ENCODE measurements at regions of chr17 and their contacts with region 1.

Region 1: DNA sequence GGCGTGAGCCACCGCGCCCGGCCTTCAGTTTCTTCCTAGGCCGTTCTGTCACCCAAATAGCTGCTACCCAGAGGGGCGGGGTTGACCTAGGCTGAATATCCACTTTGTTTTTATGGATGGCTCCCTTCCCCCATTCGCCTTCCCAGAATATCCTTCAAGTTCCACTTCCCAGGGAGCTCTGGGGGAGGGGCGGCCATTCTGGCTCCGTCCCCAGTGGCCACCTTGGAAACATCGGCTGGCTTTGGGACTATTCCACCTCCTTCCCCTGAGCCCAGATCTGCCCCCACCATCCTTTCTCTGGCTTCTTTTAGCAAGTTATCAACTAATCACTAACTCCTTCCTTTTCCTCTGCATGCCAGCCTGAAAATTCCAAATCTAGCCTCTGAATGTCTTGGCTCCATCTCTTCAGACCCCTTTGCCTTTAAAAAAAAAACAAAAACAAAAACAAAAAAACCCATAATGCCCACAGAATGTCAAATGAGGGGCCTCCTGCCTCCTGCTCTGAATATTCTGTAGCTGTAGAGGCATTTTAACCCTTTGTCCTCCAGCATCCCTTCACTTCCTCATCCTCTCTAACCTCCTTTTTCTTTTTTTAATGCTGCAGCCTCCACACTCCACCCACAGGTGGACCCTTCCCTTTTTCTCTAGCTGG is 6.4 kb downstream of the ATP1B2 start:
- DNase-seq: no peak
- H3K4me3 ChIP-seq: no peak overlapping the region
- H3K27me3 ChIP-seq: peaks cover 25% of the 10 kb centered on the region
- CTCF ChIP-seq: no peak

Region 2: DNA sequence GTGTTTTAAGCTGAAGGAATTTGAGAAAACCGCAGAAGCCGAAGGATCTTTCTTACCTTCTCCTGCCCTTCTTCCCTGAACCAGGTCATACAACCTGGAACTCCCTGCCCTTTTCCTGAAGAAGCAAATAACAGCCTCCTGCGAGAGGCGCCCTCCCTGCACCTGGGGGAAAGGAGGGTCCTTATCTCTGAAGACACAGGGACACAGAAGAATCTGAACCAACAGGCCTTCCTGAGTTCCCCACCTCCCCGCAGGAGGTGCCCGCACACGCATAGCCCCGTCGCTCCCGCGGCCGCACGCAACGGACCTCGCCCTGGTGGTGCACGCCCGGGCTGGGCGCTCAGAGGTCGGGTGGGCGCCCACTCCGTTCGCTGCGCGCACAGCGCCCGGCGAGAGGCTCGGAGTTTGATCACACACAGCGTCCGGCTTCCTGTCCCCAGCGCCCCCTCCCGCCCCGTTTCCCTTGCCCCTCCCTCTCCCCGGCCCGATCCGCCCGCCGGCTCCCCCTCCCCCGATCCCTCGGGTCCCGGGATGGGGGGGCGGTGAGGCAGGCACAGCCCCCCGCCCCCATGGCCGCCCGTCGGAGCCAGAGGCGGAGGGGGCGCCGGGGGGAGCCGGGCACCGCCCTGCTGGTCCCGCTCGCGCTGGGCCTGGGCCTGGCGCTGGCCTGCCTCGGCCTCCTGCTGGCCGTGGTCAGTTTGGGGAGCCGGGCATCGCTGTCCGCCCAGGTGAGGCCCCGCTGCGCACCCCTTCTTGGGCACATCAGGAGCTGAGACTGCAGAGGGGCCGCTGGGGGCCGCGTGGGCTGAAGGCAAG is 108.3 kb before region 1 on chr17 and contains the start of gene TNFSF12:
- CTCF ChIA-PET with region 1: no interaction called
- POLR2A ChIA-PET with region 1: no interaction called
- DNase-seq: no peak
- H3K4me3 ChIP-seq: peak within 1 kb of the TSS; percentile 68
- H3K27me3 ChIP-seq: no peaks in the 10 kb centered on the region
- CTCF ChIP-seq: peak; percentile 25
- polyA plus RNA-seq, gene TNFSF12: 29.2 and 49.5 TPM in 2 replicates

Region 3: DNA sequence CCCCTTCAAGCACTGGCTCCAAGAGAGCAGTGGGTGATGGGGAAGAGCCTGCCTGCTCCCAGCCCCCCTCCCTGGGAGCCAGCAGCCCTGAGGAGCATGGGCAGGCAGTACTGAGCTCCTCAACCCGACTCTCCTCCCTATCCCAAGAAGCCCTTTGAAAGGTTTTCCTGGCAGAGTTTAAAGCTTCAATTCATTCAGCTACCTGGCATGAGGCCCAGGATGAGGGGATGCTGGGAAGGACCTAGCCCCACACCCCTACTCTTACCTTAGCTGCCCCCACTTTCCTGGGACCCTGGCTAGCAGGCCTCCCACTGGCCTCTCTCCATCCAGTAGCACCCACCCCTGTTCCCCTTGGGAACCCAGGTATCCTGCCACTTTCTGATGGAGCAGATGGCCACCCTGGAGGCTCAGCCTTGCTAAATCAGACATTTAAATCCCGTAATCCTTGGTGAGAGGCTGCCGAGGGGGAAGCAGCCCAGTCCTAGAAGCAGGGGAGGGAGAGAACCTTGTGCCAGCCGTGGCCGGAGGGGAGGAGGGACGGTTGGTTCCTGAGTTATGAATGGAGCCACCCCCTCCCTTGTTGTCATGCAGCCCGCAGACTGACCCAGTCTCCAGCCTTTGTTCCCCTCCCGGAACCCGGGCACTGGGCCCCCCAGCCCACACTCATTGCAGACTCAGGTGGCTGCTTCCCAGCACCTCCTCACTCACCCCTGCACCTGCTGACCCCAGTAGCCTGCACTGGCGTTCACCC is 10.7 kb after region 1 on chr17:
- CTCF ChIA-PET with region 1: interaction called, 8 read pairs
- POLR2A ChIA-PET with region 1: interaction called, 15 read pairs
- DNase-seq: no peak
- H3K4me3 ChIP-seq: no peak overlapping the region
- H3K27me3 ChIP-seq: no peaks in the 10 kb centered on the region
- CTCF ChIP-seq: no peak

Measured in BJ (cell line).